Activated CD8-positive, alpha-beta T cell treated with anti-CD3 and anti-CD28 coated beads for 36 hours (primary cell): ENCODE measurements at regions of chr17 and their contacts with region 1.

Region 1: DNA sequence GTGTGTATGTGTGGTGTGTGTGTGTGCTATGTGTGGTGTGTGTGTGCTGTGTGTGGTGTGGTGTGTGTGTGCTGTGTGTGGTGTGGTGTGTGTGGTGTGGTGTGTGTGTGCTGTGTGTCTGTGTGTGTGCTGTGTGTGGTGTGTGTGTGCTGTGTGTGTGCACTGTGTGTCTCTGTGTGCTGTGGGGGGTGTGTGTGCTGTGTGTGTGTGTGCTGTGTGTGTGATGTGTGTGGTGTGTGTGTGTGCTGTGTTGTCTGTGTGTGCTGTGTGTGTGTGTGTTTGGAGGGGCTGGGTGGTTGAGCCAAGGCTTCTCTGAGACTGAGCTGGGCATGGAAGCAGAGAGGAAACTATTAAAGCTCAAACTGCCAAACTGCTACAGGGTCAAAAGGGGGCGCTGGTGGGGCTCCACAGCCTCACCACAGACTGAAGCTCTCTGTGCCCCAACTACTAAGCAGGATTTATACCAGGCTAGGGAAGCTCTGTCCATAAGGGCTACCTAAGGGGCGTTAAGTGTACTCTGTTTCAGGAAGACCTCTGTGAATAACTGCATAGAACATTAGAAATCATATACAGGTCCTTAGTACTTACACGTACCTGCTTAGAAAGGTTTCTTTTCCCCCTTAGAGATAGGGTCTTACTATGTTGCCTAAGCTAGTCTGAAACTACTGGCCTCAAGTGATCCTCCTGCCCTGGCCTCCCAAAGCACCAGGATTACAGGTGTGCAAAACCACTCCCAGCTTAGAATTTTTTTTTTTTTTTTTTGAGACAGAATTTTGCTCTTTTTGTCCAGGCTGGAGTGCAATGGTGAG is 27.8 kb upstream of the GHDC start:
- DNase-seq: peak; percentile 79
- ATAC-seq: peak; percentile 97
- H3K4me3 Mint-ChIP-seq: no peak overlapping the region
- H3K27ac Mint-ChIP-seq: peak overlapping the region; percentile 7
- H3K4me1 Mint-ChIP-seq: peaks cover 8% of the 10 kb centered on the region
- H3K27me3 Mint-ChIP-seq: no peaks in the 10 kb centered on the region
- CTCF ChIP-seq: peak; percentile 79

Region 2: DNA sequence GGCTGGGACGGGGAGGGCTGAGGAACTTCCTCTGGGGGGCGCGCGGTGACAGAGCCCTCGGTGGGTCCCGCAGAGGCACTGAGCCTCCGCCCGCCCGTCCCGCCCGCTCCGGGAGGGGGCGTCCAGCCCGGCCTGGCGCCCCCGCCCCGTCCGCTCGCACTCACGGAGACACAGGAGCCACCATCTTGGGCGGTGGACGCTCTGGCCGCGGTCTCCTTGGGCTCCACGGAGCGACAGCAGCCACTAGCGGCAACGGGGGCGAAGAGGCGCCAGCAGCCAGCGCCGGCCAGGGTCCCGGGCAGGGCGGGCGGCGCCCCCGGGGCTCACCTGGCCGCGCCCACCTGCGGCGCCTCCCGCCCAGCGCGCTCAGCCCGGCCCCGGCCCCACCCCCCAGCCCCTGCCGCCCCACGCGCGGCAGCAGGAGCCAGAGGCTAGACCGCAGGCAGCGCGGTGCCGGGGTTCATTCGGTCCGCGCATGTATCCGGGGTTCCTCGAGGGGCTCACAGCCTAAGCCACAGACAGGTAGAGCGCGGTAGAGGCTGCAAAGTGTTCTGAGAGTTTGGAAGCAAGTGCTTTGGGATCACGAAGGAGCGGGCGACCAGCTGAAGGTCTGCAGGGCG is 171.6 kb before region 1 on chr17 and contains the start of gene C17orf113:
- CTCF ChIA-PET with region 1: no interaction called
- POLR2A ChIA-PET with region 1: no interaction called
- intact Hi-C with region 1: no loop called
- DNase-seq: peak; percentile 62
- ATAC-seq: peak; percentile 84
- H3K4me3 Mint-ChIP-seq: peak within 1 kb of the TSS; percentile 53
- H3K27ac Mint-ChIP-seq: no peak within 1 kb of the TSS
- H3K4me1 Mint-ChIP-seq: peaks cover 4% of the 10 kb centered on the region
- H3K27me3 Mint-ChIP-seq: peaks cover 29% of the 10 kb centered on the region
- CTCF ChIP-seq: peak; percentile 46
- total RNA-seq, gene C17orf113: 0.72 to 0.77 TPM

Region 3: GRCh38 chr17:42233941-42234340 is 11.8 kb after region 1 on chr17:
- CTCF ChIA-PET with region 1: interaction called, 34 read pairs
- POLR2A ChIA-PET with region 1: no interaction called
- intact Hi-C with region 1: no loop called
- DNase-seq: no peak
- ATAC-seq: no peak
- H3K4me3 Mint-ChIP-seq: no peak overlapping the region
- H3K27ac Mint-ChIP-seq: peak overlapping the region; percentile 61
- H3K4me1 Mint-ChIP-seq: peaks cover 33% of the 10 kb centered on the region
- H3K27me3 Mint-ChIP-seq: no peaks in the 10 kb centered on the region
- CTCF ChIP-seq: no peak

Region 4: DNA sequence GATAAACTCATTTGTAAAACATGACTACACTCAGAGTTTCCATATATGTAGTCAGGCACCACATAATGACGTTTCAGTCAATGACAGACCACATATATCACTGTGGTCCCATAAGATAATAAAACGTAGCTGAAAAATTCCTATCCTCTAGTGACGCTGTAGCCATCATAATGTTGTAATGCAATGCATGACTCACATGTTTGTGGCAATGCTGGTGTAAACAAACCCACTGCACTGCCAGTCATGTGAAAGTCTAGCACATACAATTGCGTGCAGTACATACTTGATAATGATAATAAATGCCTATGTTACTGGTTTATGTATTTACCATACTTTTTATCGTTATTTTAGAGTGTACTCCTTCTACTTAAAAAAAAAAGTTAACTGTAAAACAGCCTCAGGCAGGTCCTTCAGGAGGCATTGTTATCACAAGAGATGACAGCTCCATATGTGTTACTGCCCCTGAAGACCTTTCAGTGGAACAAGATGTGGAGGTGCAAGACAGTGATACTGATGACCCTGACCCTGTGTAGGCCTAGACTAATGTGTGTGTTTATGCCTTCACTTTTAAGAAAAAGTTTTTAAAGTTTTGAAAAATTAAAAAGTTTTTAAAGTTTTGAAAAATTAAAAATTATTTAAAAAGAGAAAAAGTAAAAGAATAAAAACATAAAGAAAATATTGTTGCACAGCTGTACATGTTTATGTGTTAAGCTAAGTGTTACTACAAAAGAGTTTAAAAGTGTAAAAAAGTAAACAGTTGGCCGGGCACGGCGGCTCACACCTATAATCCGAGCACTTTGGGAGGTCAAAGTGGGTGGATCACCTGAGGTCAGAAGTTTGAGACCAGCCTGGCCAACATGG is 45.0 kb after region 1 on chr17:
- CTCF ChIA-PET with region 1: interaction called, 37 read pairs
- POLR2A ChIA-PET with region 1: interaction called, 3 read pairs
- intact Hi-C with region 1: no loop called
- DNase-seq: peak; percentile 74
- ATAC-seq: peak; percentile 85
- H3K4me3 Mint-ChIP-seq: peak overlapping the region; percentile 27
- H3K27ac Mint-ChIP-seq: peak overlapping the region; percentile 96
- H3K4me1 Mint-ChIP-seq: peaks cover 61% of the 10 kb centered on the region
- H3K27me3 Mint-ChIP-seq: no peaks in the 10 kb centered on the region
- CTCF ChIP-seq: no peak

Region 5: DNA sequence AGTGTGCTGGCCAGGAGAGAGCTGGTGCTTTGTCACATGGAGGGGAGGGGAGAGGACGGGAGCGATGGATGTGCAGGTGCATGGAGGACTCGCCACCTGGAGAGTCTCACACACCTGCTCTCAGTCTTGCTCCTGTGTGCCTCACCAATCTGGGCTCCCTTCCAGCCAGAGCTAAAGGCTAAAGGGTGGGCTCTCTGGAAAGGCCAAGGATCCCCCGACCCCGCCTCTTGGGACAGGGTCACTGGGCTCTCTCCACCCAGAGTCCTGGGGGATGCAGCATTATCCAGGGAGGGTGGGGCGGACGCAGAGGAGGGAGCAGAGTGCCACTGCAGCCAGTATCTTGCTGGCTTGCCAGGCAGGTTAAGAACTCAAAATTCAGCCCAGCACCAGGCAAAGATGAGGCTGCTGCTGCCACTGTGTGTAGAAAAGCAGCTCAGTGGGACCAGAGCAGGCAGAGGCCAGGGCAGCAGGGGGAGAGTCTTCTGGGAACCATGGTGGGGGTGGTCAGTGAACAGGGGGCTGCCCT is 59.5 kb after region 1 on chr17:
- CTCF ChIA-PET with region 1: interaction called, 24 read pairs
- POLR2A ChIA-PET with region 1: no interaction called
- intact Hi-C with region 1: loop called (anchors 5 kb)
- DNase-seq: no peak
- ATAC-seq: no peak
- H3K4me3 Mint-ChIP-seq: no peak overlapping the region
- H3K27ac Mint-ChIP-seq: peak overlapping the region; percentile 34
- H3K4me1 Mint-ChIP-seq: peaks cover 49% of the 10 kb centered on the region
- H3K27me3 Mint-ChIP-seq: no peaks in the 10 kb centered on the region
- CTCF ChIP-seq: no peak

Region 6: DNA sequence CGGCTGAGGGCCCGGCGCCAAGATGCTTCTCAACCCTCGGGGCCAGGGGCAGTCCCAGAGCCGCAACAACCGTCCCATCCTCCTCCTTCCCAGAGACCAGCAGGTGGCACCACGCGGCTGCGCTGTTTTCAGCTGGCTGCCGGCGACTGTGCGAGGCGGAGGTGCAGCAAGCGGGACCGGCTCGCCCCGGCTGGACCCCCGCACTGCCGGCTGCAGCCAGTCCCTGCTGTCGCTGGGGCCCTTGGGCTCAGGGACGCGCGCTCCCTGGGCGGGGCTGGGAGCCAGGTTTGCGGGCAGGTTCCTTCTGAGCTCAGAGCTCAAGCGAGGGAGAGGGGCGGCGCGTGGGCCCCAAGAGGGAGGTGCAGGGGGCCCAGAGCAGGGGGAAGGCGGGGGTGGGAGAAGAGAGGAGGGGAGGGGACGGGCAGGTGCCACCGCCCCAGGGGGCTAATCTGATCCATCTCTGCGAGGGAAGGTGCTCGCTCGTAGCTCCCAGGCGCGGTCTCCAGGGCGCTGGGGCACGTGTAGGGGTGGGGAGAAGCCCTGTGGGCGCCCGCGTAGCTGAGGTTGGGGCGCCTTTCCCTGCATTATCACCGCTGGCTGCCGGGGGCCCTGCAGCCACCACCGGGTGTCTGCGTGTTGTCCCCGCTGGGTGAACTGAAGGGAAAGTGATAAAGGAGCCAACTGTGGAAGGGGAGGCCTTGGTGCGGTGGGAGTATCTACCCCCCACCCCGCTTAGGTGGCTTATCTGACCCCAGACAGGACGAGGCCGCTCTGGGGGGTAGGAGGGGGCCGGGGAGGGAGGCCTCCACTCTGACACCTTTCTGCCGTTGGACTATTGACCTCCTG is 90.4 kb after region 1 on chr17:
- CTCF ChIA-PET with region 1: interaction called, 57 read pairs
- POLR2A ChIA-PET with region 1: interaction called, 5 read pairs
- intact Hi-C with region 1: no loop called
- DNase-seq: peak; percentile 94
- ATAC-seq: peak; percentile 70
- H3K4me3 Mint-ChIP-seq: peak overlapping the region; percentile 66
- H3K27ac Mint-ChIP-seq: peak overlapping the region; percentile 94
- H3K4me1 Mint-ChIP-seq: peaks cover 86% of the 10 kb centered on the region
- H3K27me3 Mint-ChIP-seq: no peaks in the 10 kb centered on the region
- CTCF ChIP-seq: peak; percentile 64

Region 7: GRCh38 chr17:42405963-42406495 is 183.9 kb after region 1 on chr17:
- CTCF ChIA-PET with region 1: interaction called, 49 read pairs
- POLR2A ChIA-PET with region 1: no interaction called
- intact Hi-C with region 1: no loop called
- DNase-seq: peak; percentile 89
- ATAC-seq: peak; percentile 77
- H3K4me3 Mint-ChIP-seq: no peak overlapping the region
- H3K27ac Mint-ChIP-seq: no peak overlapping the region
- H3K4me1 Mint-ChIP-seq: peaks cover 24% of the 10 kb centered on the region
- H3K27me3 Mint-ChIP-seq: no peaks in the 10 kb centered on the region
- CTCF ChIP-seq: peak; percentile 94